HCT116 (cell line): ENCODE measurements at regions of chr2 and their contacts with region 1.

Region 1: GRCh38 chr2:70698847-70699246 is 69.2 kb downstream of the ADD2 start:
- DNase-seq: no peak
- ATAC-seq: no peak
- H3K4me3 ChIP-seq: no peak overlapping the region
- H3K27ac ChIP-seq: no peak overlapping the region
- H3K4me1 ChIP-seq: no peaks in the 10 kb centered on the region
- H3K27me3 ChIP-seq: no peaks in the 10 kb centered on the region
- CTCF ChIP-seq: no peak
- POLR2A ChIP-seq: no peak
- RAD21 ChIP-seq: no peak

Region 2: DNA sequence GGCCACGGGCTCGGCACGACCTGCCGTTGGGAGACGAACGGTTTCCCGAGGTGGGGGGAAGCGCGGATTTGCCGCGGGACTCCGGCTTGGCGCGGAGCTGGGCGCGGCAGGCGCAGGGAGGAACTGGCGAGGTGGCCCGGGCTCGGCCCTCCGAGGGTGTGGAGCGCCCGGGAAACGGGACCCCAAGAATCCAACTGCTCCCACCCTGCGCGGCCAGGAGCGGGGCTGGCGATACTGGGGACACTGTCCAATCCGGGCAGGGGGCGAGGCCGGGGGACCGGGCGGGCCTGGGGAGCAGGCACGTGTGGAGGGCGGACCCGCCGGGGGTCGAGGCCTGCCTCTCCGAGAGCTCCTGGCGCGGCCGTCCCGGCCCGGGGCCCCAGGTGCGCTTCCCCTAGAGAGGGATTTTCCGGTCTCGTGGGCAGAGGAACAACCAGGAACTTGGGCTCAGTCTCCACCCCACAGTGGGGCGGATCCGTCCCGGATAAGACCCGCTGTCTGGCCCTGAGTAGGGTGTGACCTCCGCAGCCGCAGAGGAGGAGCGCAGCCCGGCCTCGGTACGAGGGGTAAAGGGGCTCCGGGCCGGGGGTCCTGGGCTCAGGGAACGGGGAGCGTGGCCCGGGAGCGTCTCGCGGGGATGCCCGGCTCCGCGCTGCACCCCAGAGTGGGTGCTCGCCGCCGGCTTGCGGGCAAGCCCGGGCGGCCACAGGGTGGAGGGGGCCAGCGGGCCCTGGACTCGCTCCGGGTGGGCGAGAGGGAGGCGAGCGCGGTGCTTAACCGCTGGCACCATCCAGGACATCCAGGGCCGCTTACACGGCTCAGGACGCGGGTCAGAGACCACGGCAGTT is 957.0 kb before region 1 on chr2 and contains the start of gene ANXA4:
- CTCF ChIA-PET with region 1: no interaction called
- POLR2A ChIA-PET with region 1: no interaction called
- RAD21 ChIA-PET with region 1: no interaction called
- intact Hi-C with region 1: no loop called
- DNase-seq: peak; percentile 62
- ATAC-seq: peak; percentile 92
- H3K4me3 ChIP-seq: peak within 1 kb of the TSS; percentile 77 to 95
- H3K27ac ChIP-seq: peak within 1 kb of the TSS; percentile 79
- H3K4me1 ChIP-seq: peaks cover 18 to 29% of the 10 kb centered on the region in 2 experiments
- H3K27me3 ChIP-seq: no peaks in the 10 kb centered on the region
- CTCF ChIP-seq: no peak
- POLR2A ChIP-seq: peak; percentile 79
- RAD21 ChIP-seq: no peak; the same call in none of the 2 replicates
- total RNA-seq, gene ANXA4: 64.6 TPM

Region 3: GRCh38 chr2:70523996-70524965 is 174.6 kb before region 1 on chr2:
- CTCF ChIA-PET with region 1: no interaction called
- POLR2A ChIA-PET with region 1: no interaction called
- RAD21 ChIA-PET with region 1: no interaction called
- intact Hi-C with region 1: no loop called
- DNase-seq: peak; percentile 86
- ATAC-seq: peak; percentile 90
- H3K4me3 ChIP-seq: peak overlapping the region; percentile 2 to 47; a peak in 3 of 4 replicates
- H3K27ac ChIP-seq: peak overlapping the region; percentile 81
- H3K4me1 ChIP-seq: peaks cover 53 to 91% of the 10 kb centered on the region in 2 experiments
- H3K27me3 ChIP-seq: no peaks in the 10 kb centered on the region
- CTCF ChIP-seq: no peak
- POLR2A ChIP-seq: no peak
- RAD21 ChIP-seq: 0 out of 2 replicates have a peak, but pooled peaks have one; percentile 20

Region 4: GRCh38 chr2:70686577-70687460 is 12.0 kb before region 1 on chr2:
- CTCF ChIA-PET with region 1: interaction called, 10 read pairs
- POLR2A ChIA-PET with region 1: no interaction called
- RAD21 ChIA-PET with region 1: no interaction called
- intact Hi-C with region 1: no loop called
- DNase-seq: peak; percentile 48
- ATAC-seq: peak; percentile 99
- H3K4me3 ChIP-seq: no peak overlapping the region
- H3K27ac ChIP-seq: no peak overlapping the region; the same call in 1 of the 2 replicates
- H3K4me1 ChIP-seq: peaks cover 8 to 15% of the 10 kb centered on the region in 2 experiments; a peak in 3 of 4 replicates
- H3K27me3 ChIP-seq: no peaks in the 10 kb centered on the region
- CTCF ChIP-seq: peak; percentile 62 to 92 (median 71); a peak in 5 of 6 replicates
- POLR2A ChIP-seq: no peak
- RAD21 ChIP-seq: peak; percentile 47

Region 5: GRCh38 chr2:71049365-71050360 is 350.8 kb after region 1 on chr2:
- CTCF ChIA-PET with region 1: no interaction called
- POLR2A ChIA-PET with region 1: no interaction called
- RAD21 ChIA-PET with region 1: no interaction called
- intact Hi-C with region 1: no loop called
- DNase-seq: no peak
- ATAC-seq: no peak
- H3K4me3 ChIP-seq: no peak overlapping the region
- H3K27ac ChIP-seq: no peak overlapping the region
- H3K4me1 ChIP-seq: peaks cover 3 to 9% of the 10 kb centered on the region in 2 experiments; a peak in 2 of 4 replicates
- H3K27me3 ChIP-seq: no peaks in the 10 kb centered on the region
- CTCF ChIP-seq: no peak
- POLR2A ChIP-seq: no peak
- RAD21 ChIP-seq: peak; percentile 32; the same call in 1 of the 2 replicates